ENCODE measurements at regions of chr9 and their contacts with region 1.

Region 1: DNA sequence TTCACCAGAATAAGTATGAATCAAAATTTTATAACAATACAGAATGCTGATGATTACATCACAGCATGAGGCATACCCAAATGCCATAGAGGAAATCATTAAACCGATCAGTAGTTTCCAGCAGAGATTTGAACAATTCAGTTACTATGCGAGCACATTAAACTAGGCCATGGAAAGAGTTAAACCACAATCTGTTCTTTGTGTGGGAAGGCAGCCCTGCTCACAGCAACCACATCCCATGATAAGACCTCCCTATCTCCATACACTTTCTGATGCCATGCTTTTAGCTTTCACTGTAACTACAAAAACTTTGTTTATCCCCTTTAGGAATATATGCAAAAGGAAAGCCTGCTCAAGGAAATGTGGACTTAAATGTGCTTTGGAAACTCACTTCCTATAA is 4.5 kb downstream of the NFIB start:
- DNase-seq: no peak
- H3K4me3 ChIP-seq: peak overlapping the region in 54 of 59 donors; percentile 6 to 92 (median 76)
- H3K27ac ChIP-seq: peak overlapping the region in 54 of 59 donors; percentile 5 to 98 (median 90)
- H3K27me3 ChIP-seq: peaks cover 0 to 9% (median 0%) of the 10 kb centered on the region in 45 donors
- CTCF ChIP-seq: no peak

Region 2: GRCh38 chr9:14251154-14252071 is 58.0 kb before region 1 on chr9:
- intact Hi-C with region 1: loop called in 1 of 2 experiments (anchors 10 kb)
- DNase-seq: peak; percentile 44 to 87 (median 66)
- H3K4me3 ChIP-seq: peak overlapping the region in 42 of 59 donors; percentile 0 to 47 (median 26)
- H3K27ac ChIP-seq: peak overlapping the region in 30 of 59 donors; percentile 3 to 74 (median 37)
- H3K27me3 ChIP-seq: no peaks in the 10 kb centered on the region
- CTCF ChIP-seq: peak in 5 of 56 donors; percentile 9 to 17 (median 12)

Region 3: GRCh38 chr9:14296495-14297113 is 12.8 kb before region 1 on chr9:
- intact Hi-C with region 1: no loop called
- DNase-seq: no peak
- H3K4me3 ChIP-seq: no peak overlapping the region
- H3K27ac ChIP-seq: no peak overlapping the region
- H3K27me3 ChIP-seq: no peaks in the 10 kb centered on the region
- CTCF ChIP-seq: no peak

Region 4: GRCh38 chr9:14608540-14608939 is 299.1 kb after region 1 on chr9:
- intact Hi-C with region 1: no loop called
- DNase-seq: no peak
- H3K4me3 ChIP-seq: no peak overlapping the region
- H3K27ac ChIP-seq: no peak overlapping the region
- H3K27me3 ChIP-seq: no peaks in the 10 kb centered on the region
- CTCF ChIP-seq: no peak